ENCODE measurements at regions of chr1 and their contacts with region 1.

Region 1: GRCh38 chr1:26744075-26744959 is 43.4 kb upstream of the PIGV start:
- DNase-seq: peak; percentile 87 to 95 (median 92)
- H3K4me3 ChIP-seq: peak overlapping the region in 2 of 3 experiments; percentile 34 to 66
- H3K4me3 Mint-ChIP-seq: peak overlapping the region; percentile 47 to 80
- H3K27ac ChIP-seq: peak overlapping the region; percentile 37 to 89
- H3K27ac Mint-ChIP-seq: peak overlapping the region; percentile 84 to 95 (median 92)
- H3K4me1 ChIP-seq: peaks cover 35 to 57% of the 10 kb centered on the region in 2 donors
- H3K4me1 Mint-ChIP-seq: peaks cover 56% of the 10 kb centered on the region
- H3K27me3 ChIP-seq: no peaks in the 10 kb centered on the region
- H3K27me3 Mint-ChIP-seq: no peaks in the 10 kb centered on the region
- CTCF ChIP-seq: no peak

Region 2: DNA sequence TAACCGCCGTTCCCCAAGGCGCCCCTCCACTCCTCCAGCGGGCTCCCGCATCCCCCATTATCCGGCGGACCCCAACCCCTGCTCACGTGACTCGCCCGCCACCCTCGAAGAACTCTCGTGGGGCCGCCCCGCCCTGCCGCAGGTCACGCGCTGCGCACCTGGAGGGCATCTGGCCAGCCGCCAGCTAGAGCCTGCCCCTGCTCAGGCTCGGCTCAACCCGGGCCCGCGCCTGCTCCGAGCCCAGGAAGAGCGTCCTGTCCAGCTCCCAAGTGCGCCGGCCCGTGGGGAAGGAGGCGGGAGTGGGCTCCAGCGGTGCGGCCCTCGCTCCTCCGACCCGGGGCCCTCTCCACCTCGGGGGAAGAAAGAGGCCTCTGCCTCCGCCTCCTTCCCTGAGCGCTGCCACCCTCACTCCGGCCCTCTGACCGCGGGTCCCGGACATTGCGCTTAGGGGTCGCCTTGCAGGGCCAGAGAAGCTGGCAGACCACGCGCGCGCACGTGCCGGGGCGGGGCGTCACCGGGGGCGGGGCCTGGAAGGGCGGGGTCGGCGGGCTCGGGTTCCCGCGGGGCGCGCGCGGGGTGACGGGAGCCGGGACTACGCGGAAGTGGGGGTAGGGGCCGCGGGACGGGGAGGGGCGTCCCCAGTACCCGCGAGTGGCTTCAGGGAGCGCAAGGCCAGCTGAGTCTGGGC is 243.7 kb before region 1 on chr1:
- intact Hi-C with region 1: no loop called
- DNase-seq: peak; percentile 73 to 77 (median 75)
- H3K4me3 ChIP-seq: peak overlapping the region; percentile 73 to 95 (median 86)
- H3K4me3 Mint-ChIP-seq: peak overlapping the region; percentile 85 to 91
- H3K27ac ChIP-seq: peak overlapping the region; percentile 69 to 91
- H3K27ac Mint-ChIP-seq: peak overlapping the region; percentile 87 to 97 (median 93)
- H3K4me1 ChIP-seq: peaks cover 17 to 22% of the 10 kb centered on the region in 2 donors
- H3K4me1 Mint-ChIP-seq: peaks cover 20% of the 10 kb centered on the region
- H3K27me3 ChIP-seq: no peaks in the 10 kb centered on the region
- H3K27me3 Mint-ChIP-seq: peaks cover 0 to 9% (median 0%) of the 10 kb centered on the region in 3 donors
- CTCF ChIP-seq: peak; percentile 63

Region 3: GRCh38 chr1:26695356-26696118 is 48.8 kb before region 1 on chr1 and contains the start of gene ARID1A:
- intact Hi-C with region 1: loop called in 1 of 2 experiments (anchors 5 kb)
- DNase-seq: peak; percentile 90 to 95 (median 91)
- H3K4me3 ChIP-seq: peak within 1 kb of the TSS; percentile 63 to 89 (median 85)
- H3K4me3 Mint-ChIP-seq: peak within 1 kb of the TSS; percentile 82 to 90
- H3K27ac ChIP-seq: peak within 1 kb of the TSS; percentile 62 to 90
- H3K27ac Mint-ChIP-seq: peak within 1 kb of the TSS; percentile 79 to 94 (median 82)
- H3K4me1 ChIP-seq: peaks cover 55 to 65% of the 10 kb centered on the region in 2 donors
- H3K4me1 Mint-ChIP-seq: peaks cover 38% of the 10 kb centered on the region
- H3K27me3 ChIP-seq: no peaks in the 10 kb centered on the region
- H3K27me3 Mint-ChIP-seq: no peaks in the 10 kb centered on the region
- CTCF ChIP-seq: no peak
- polyA plus RNA-seq, gene ARID1A: 6.6 to 84.4 (median 9.5) TPM

Measured in CD14-positive monocyte (primary cell).